Left ventricle myocardium superior (tissue), 1 donor: ENCODE measurements at regions of chr9 and their contacts with region 1.

Region 1: GRCh38 chr9:130701056-130702022 is 7.8 kb downstream of the EXOSC2 start:
- DNase-seq: peak; percentile 85
- ATAC-seq: peak; percentile 94

Region 2: GRCh38 chr9:130639119-130639810 is 62.1 kb before region 1 on chr9:
- intact Hi-C with region 1: no loop called
- DNase-seq: no peak
- ATAC-seq: no peak

Region 3: GRCh38 chr9:131046581-131047202 is 345.4 kb after region 1 on chr9:
- intact Hi-C with region 1: loop called (anchors 10 kb)
- DNase-seq: peak; percentile 84
- ATAC-seq: peak; percentile 90